ENCODE measurements at regions of chr16 and their contacts with region 1.

Region 1: DNA sequence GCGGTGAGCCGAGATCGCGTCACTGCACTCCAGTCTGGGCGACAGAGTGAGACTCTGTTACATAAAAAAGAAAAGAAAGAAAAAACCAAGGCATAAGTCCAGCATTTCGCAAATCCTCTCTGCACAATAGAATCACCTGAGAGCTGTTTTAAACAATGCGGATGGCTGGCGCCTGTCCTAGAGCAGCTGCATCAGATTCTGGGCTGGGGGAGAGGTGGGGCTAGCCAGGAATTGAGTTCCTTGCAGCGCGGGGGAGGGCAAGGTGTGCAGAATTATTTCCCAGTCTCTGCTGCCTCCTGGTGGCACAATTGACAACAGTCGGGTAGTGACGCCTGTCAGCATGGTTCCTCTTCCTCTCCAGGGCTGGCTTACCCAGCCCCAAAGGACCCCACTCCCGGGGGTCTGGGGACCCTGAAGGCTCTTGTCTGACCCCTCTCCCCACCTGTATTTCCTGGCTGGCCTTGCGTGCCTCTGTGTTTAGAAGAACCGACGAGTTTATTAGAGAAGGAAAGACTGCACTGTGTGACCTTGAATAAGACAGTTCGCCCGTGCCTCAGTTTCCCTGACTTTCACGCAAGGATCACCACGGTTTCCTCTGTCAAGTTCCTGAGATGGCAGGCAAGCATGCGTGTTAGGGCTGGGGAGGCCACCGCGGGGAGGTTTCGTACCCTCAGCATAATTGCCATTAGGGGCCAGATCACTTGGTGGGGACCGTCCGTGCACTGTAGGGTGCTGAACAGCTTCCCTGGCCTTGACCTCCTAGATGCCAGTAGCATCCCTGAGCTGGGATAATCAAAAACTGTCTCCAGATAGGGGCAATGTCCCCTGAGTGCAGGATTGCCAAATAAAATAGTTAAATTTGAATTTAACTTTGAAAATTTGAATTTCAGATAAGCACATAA is 41.0 kb upstream of the PLCG2 start:
- DNase-seq: peak; percentile 80
- ATAC-seq: peak; percentile 83
- H3K4me3 ChIP-seq: peak overlapping the region; percentile 64
- H3K27ac ChIP-seq: peak overlapping the region; percentile 78
- H3K4me1 ChIP-seq: peaks cover 29% of the 10 kb centered on the region
- H3K27me3 ChIP-seq: no peaks in the 10 kb centered on the region
- CTCF ChIP-seq: peak; percentile 83 to 97 (median 88); a peak in 5 of 6 replicates
- EP300 ChIP-seq: no peak; a peak in 1 of 4 replicates
- POLR2A ChIP-seq: no peak
- RAD21 ChIP-seq: peak; percentile 88

Region 2: DNA sequence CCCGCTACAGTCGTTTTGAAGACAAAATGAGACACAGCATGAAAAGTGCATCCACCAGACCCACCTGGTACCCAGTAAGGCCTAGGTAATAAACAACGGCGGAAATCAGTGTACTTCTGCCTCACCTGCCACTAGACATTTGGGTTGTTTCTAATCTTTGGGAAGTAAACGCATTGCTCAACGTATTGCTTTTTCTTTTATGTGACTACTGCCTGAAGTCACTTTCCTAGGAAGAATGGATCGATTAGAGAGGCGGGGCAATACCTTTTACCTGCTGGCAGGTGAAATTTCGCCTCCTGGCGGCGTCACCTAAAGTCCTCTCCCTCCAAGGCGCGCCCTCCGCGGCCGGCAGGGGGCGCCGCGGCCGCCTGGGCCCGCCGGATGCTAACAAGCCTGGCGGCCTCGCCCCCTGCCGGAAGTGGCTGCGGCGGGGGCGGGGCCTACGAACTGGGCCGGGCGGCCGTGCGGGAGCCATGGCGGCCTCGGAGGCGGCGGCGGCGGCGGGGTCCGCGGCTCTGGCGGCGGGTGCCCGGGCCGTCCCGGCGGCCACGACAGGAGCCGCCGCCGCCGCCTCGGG is 702.6 kb before region 1 on chr16 and contains the start of gene ATMIN:
- CTCF ChIA-PET with region 1: interaction called, 17 read pairs
- POLR2A ChIA-PET with region 1: no interaction called
- RAD21 ChIA-PET with region 1: no interaction called
- SMC1A ChIA-PET with region 1: interaction called, 3 read pairs
- in situ Hi-C with region 1: loop called (anchors 5 kb)
- intact Hi-C with region 1: loop called (anchors 1 kb)
- DNase-seq: peak; percentile 15
- ATAC-seq: peak; percentile 97
- H3K4me3 ChIP-seq: peak within 1 kb of the TSS; percentile 81
- H3K27ac ChIP-seq: peak within 1 kb of the TSS; percentile 32; the same call in 1 of the 2 replicates
- H3K4me1 ChIP-seq: no peaks in the 10 kb centered on the region
- H3K27me3 ChIP-seq: no peaks in the 10 kb centered on the region
- CTCF ChIP-seq: peak; percentile 88 to 99 (median 98)
- EP300 ChIP-seq: no peak
- POLR2A ChIP-seq: peak; percentile 63
- RAD21 ChIP-seq: peak; percentile 57
- polyA plus RNA-seq, gene ATMIN: 5.2 to 8.7 TPM

Region 3: DNA sequence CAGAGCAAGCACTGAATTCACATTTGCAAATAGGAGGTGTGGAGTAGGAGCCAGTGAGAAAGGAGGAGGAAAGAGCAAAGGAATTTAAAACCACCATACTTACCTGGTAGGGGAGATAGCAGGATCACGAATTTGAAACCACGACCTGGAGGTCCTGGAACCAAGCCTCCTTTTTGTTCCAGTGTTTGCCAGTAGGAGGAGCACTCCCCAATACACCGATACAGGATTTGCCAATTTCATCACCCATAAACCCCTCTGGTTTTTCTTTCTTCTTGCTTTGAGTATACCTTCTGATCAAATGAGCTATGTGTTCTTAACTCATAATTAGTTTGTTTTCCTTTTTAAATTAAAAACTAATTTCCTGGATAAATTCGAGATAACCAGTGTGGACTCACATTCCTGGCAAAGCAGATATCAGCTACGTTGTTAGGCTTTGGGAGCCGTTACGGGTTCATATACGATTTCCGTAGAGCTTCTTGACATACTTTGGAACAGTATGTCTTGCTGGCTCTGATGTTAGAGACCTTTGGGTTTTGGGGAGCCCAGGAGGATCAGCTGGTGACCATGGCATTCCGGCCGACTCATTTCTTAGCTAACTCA is 477.0 kb before region 1 on chr16:
- CTCF ChIA-PET with region 1: interaction called, 4 read pairs
- POLR2A ChIA-PET with region 1: no interaction called
- RAD21 ChIA-PET with region 1: no interaction called
- SMC1A ChIA-PET with region 1: no interaction called
- in situ Hi-C with region 1: no loop called
- intact Hi-C with region 1: loop called (anchors 10 kb)
- DNase-seq: no peak
- ATAC-seq: peak; percentile 68
- H3K4me3 ChIP-seq: no peak overlapping the region
- H3K27ac ChIP-seq: no peak overlapping the region
- H3K4me1 ChIP-seq: no peaks in the 10 kb centered on the region
- H3K27me3 ChIP-seq: no peaks in the 10 kb centered on the region
- CTCF ChIP-seq: peak; percentile 45 to 68 (median 68)
- EP300 ChIP-seq: no peak
- POLR2A ChIP-seq: no peak
- RAD21 ChIP-seq: 0 out of 2 replicates have a peak, but pooled peaks have one; percentile 15

Region 4: DNA sequence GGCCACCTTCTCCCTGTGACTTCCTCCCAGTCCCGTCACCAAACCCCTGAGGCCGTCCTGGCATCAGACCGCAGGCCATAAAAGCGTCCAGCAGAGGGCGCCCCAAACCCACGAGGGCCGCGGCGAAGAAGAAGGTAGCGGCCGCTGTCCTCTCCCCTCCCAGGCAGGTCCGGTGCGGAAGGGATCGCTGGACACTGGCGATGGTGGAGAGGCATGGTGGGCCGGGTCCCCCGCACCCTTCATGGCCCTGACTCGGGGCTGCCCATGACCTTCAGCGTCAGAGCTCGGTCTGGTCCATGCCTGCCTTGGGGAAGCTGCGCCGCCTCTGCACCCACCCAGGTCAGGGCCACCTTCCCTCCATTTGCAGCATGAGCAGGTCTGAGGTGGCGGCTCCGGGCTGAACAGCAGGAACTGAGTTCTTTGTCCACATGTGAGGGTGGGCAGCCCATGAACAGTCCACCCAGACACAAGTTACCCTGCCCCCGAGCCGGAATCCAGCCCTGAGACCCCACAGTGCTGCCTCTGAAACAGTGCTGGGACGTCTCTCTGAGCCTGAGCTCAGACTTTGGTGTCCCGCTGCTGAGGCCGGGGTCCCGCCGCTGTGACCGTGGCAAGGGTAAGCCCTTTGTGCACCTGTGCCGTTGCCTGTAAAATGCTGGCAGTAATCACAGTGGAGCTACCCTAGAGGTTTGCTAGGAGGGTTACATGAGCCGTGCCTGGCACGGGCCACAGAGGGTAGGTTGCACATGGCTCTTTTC is 334.3 kb before region 1 on chr16:
- CTCF ChIA-PET with region 1: interaction called, 3 read pairs
- POLR2A ChIA-PET with region 1: no interaction called
- RAD21 ChIA-PET with region 1: interaction called, 3 read pairs
- SMC1A ChIA-PET with region 1: interaction called, 5 read pairs
- in situ Hi-C with region 1: no loop called
- intact Hi-C with region 1: loop called (anchors 1 kb)
- DNase-seq: peak; percentile 28
- ATAC-seq: peak; percentile 100
- H3K4me3 ChIP-seq: no peak overlapping the region
- H3K27ac ChIP-seq: no peak overlapping the region
- H3K4me1 ChIP-seq: no peaks in the 10 kb centered on the region
- H3K27me3 ChIP-seq: no peaks in the 10 kb centered on the region; a peak in 1 of 4 replicates
- CTCF ChIP-seq: peak; percentile 87 to 96 (median 88)
- EP300 ChIP-seq: no peak
- POLR2A ChIP-seq: no peak
- RAD21 ChIP-seq: peak; percentile 99

Region 5: GRCh38 chr16:81752225-81752875 is 14.2 kb after region 1 on chr16:
- CTCF ChIA-PET with region 1: interaction called, 27 read pairs
- POLR2A ChIA-PET with region 1: interaction called, 11 read pairs
- RAD21 ChIA-PET with region 1: interaction called, 47 read pairs
- SMC1A ChIA-PET with region 1: interaction called, 26 read pairs
- in situ Hi-C with region 1: no loop called
- intact Hi-C with region 1: no loop called
- DNase-seq: peak; percentile 72
- ATAC-seq: peak; percentile 97
- H3K4me3 ChIP-seq: peak overlapping the region; percentile 54; the same call in 1 of the 2 replicates
- H3K27ac ChIP-seq: peak overlapping the region; percentile 68
- H3K4me1 ChIP-seq: peaks cover 46% of the 10 kb centered on the region
- H3K27me3 ChIP-seq: no peaks in the 10 kb centered on the region
- CTCF ChIP-seq: no peak
- EP300 ChIP-seq: peak in 1 of 2 experiments; percentile 86; a peak in 3 of 4 replicates
- POLR2A ChIP-seq: peak; percentile 86
- RAD21 ChIP-seq: no peak

Region 6: GRCh38 chr16:81808933-81809496 is 70.9 kb after region 1 on chr16:
- CTCF ChIA-PET with region 1: interaction called, 4 read pairs
- POLR2A ChIA-PET with region 1: interaction called, 6 read pairs
- RAD21 ChIA-PET with region 1: interaction called, 12 read pairs
- SMC1A ChIA-PET with region 1: interaction called, 13 read pairs
- in situ Hi-C with region 1: no loop called
- intact Hi-C with region 1: no loop called
- DNase-seq: peak; percentile 99
- ATAC-seq: peak; percentile 75
- H3K4me3 ChIP-seq: peak overlapping the region; percentile 48; the same call in 1 of the 2 replicates
- H3K27ac ChIP-seq: peak overlapping the region; percentile 99
- H3K4me1 ChIP-seq: peaks cover 78% of the 10 kb centered on the region
- H3K27me3 ChIP-seq: no peaks in the 10 kb centered on the region
- CTCF ChIP-seq: no peak
- EP300 ChIP-seq: peak; percentile 98
- POLR2A ChIP-seq: peak; percentile 61
- RAD21 ChIP-seq: peak; percentile 9; the same call in 1 of the 2 replicates

Region 7: GRCh38 chr16:81885976-81886586 is 147.9 kb after region 1 on chr16:
- CTCF ChIA-PET with region 1: interaction called, 5 read pairs
- POLR2A ChIA-PET with region 1: no interaction called
- RAD21 ChIA-PET with region 1: interaction called, 3 read pairs
- SMC1A ChIA-PET with region 1: interaction called, 8 read pairs
- in situ Hi-C with region 1: no loop called
- intact Hi-C with region 1: loop called (anchors 1 kb)
- DNase-seq: no peak
- ATAC-seq: peak; percentile 91
- H3K4me3 ChIP-seq: no peak overlapping the region
- H3K27ac ChIP-seq: no peak overlapping the region
- H3K4me1 ChIP-seq: no peaks in the 10 kb centered on the region
- H3K27me3 ChIP-seq: no peaks in the 10 kb centered on the region
- CTCF ChIP-seq: peak; percentile 68 to 71 (median 68); a peak in 5 of 6 replicates
- EP300 ChIP-seq: no peak
- POLR2A ChIP-seq: no peak
- RAD21 ChIP-seq: peak; percentile 54